ENCODE measurements at regions of chr9 and their contacts with region 1.

Region 1: GRCh38 chr9:3385871-3386270 is 139.9 kb downstream of the RFX3 start:
- DNase-seq: peak; percentile 65
- ATAC-seq: peak; percentile 100
- H3K4me3 Mint-ChIP-seq: no peak overlapping the region
- H3K27ac Mint-ChIP-seq: no peak overlapping the region
- H3K4me1 Mint-ChIP-seq: peaks cover 36% of the 10 kb centered on the region
- H3K27me3 Mint-ChIP-seq: no peaks in the 10 kb centered on the region

Region 2: DNA sequence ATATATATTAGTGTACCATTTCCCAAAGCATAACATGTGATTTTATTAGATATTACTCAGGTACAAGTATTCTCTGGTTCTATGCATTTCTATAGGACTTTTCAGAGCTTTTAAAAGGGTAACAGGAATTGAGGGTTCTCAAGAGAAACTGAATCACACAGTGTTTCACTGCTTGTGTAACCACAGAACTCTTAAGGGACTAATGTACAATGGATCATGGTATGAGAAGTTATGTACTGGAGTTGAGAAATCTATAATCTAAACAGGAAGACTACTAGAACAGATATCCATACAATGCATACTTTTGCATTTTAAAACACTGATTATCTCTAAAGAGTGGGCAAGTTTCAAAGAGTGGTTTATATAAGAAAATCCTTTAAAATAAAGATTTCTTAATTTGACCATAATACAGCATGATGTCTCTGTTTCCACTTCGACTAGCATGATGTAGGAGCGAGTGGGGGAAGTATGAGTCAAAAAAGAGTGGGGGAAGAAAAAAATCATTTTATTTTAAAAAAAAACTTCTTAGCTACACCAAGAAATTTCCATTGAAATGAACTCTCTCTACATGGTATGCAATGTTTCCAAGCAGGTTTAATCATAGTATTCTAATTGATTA is 43.6 kb before region 1 on chr9:
- CTCF ChIA-PET with region 1: interaction called, 7 read pairs
- POLR2A ChIA-PET with region 1: interaction called, 4 read pairs
- intact Hi-C with region 1: loop called (anchors 2 kb)
- DNase-seq: no peak
- ATAC-seq: peak; percentile 86
- H3K4me3 Mint-ChIP-seq: no peak overlapping the region
- H3K27ac Mint-ChIP-seq: peak overlapping the region; percentile 75
- H3K4me1 Mint-ChIP-seq: peaks cover 41% of the 10 kb centered on the region
- H3K27me3 Mint-ChIP-seq: no peaks in the 10 kb centered on the region

Region 3: GRCh38 chr9:3398232-3398648 is 12.4 kb after region 1 on chr9:
- CTCF ChIA-PET with region 1: interaction called, 5 read pairs
- POLR2A ChIA-PET with region 1: interaction called, 7 read pairs
- intact Hi-C with region 1: loop called in 1 of 2 experiments (anchors 1 kb)
- DNase-seq: peak; percentile 13
- ATAC-seq: peak; percentile 60
- H3K4me3 Mint-ChIP-seq: peak overlapping the region; percentile 35
- H3K27ac Mint-ChIP-seq: peak overlapping the region; percentile 94
- H3K4me1 Mint-ChIP-seq: peaks cover 33% of the 10 kb centered on the region
- H3K27me3 Mint-ChIP-seq: no peaks in the 10 kb centered on the region

Region 4: GRCh38 chr9:3578786-3579185 is 192.9 kb after region 1 on chr9:
- CTCF ChIA-PET with region 1: no interaction called
- POLR2A ChIA-PET with region 1: no interaction called
- intact Hi-C with region 1: loop called in 1 of 2 experiments (anchors 5 kb)
- DNase-seq: peak; percentile 37
- ATAC-seq: peak; percentile 100
- H3K4me3 Mint-ChIP-seq: no peak overlapping the region
- H3K27ac Mint-ChIP-seq: peak overlapping the region; percentile 68
- H3K4me1 Mint-ChIP-seq: peaks cover 8% of the 10 kb centered on the region
- H3K27me3 Mint-ChIP-seq: no peaks in the 10 kb centered on the region

Measured in activated CD4-positive, alpha-beta T cell treated with anti-CD3 and anti-CD28 coated beads for 36 hours (primary cell).